ENCODE measurements at regions of chr9 and their contacts with region 1.

Region 1: GRCh38 chr9:36008774-36009300 is 27.9 kb upstream of the RECK start:
- DNase-seq: peak; percentile 77
- H3K4me3 ChIP-seq: peak overlapping the region in 1 of 2 experiments; percentile 48; a peak in 1 of 4 replicates
- H3K27ac ChIP-seq: no peak overlapping the region
- H3K4me1 ChIP-seq: no peaks in the 10 kb centered on the region; a peak in 1 of 4 replicates
- H3K27me3 ChIP-seq: no peaks in the 10 kb centered on the region
- CTCF ChIP-seq: peak; percentile 98
- EP300 ChIP-seq: no peak
- RAD21 ChIP-seq: peak; percentile 85

Region 2: DNA sequence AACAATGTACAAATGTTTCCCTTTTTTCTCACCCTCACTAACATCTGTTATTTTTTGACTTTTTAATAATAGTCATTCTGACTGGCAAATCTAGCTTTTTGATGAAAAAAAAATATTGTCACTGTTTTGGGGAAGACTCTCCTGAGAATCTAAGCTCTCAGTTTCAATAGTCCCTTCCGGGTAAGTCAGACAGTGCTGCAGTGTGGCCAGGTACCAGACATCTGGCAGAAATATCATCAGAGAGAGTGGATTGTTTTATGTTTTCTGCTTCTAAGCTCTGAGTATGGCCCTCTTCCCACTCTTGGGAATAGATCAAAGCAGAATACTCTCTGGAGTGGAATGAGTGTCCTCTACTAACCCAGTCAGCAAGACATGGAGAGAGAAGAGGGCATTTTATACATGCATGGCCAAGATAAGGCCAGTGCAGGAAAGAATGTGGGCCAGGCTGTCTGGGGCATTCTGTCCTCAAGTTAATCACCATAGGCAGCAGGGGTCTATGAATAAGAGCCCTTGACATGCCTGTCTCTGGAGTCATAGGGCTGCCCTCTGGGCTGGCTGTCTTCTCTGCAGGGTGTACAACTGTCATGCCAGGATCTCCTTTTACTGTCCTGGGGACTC is 12.4 kb before region 1 on chr9:
- CTCF ChIA-PET with region 1: interaction called, 16 read pairs
- POLR2A ChIA-PET with region 1: no interaction called
- DNase-seq: no peak
- H3K4me3 ChIP-seq: no peak overlapping the region
- H3K27ac ChIP-seq: peak overlapping the region in 1 of 2 experiments; percentile 58; a peak in 2 of 4 replicates
- H3K4me1 ChIP-seq: peaks cover 0 to 17% of the 10 kb centered on the region in 2 experiments; a peak in 1 of 4 replicates
- H3K27me3 ChIP-seq: no peaks in the 10 kb centered on the region
- CTCF ChIP-seq: no peak
- EP300 ChIP-seq: no peak
- RAD21 ChIP-seq: no peak

Region 3: GRCh38 chr9:36023260-36024048 is 14.6 kb after region 1 on chr9:
- CTCF ChIA-PET with region 1: interaction called, 128 read pairs
- POLR2A ChIA-PET with region 1: no interaction called
- DNase-seq: peak; percentile 68
- H3K4me3 ChIP-seq: no peak overlapping the region
- H3K27ac ChIP-seq: no peak overlapping the region
- H3K4me1 ChIP-seq: peaks cover 0 to 7% of the 10 kb centered on the region in 2 experiments; a peak in 2 of 4 replicates
- H3K27me3 ChIP-seq: no peaks in the 10 kb centered on the region
- CTCF ChIP-seq: peak; percentile 93
- EP300 ChIP-seq: no peak
- RAD21 ChIP-seq: peak; percentile 88

Region 4: GRCh38 chr9:36036780-36037548 is 28.1 kb after region 1 on chr9 and contains the start of gene RECK:
- CTCF ChIA-PET with region 1: interaction called, 14 read pairs
- POLR2A ChIA-PET with region 1: no interaction called
- DNase-seq: peak; percentile 96
- H3K4me3 ChIP-seq: peak within 1 kb of the TSS; percentile 72 to 81
- H3K27ac ChIP-seq: peak within 1 kb of the TSS; percentile 73 to 79
- H3K4me1 ChIP-seq: peaks cover 6 to 17% of the 10 kb centered on the region in 2 experiments
- H3K27me3 ChIP-seq: no peaks in the 10 kb centered on the region
- CTCF ChIP-seq: no peak
- EP300 ChIP-seq: 0 out of 4 replicates have a peak, but pooled peaks of 1 of the 2 experiments have one; percentile 11
- RAD21 ChIP-seq: no peak
- polyA plus RNA-seq, gene RECK: 22.8 and 27.3 TPM in 2 replicates